ENCODE measurements at regions of chr17 and their contacts with region 1.

Region 1: GRCh38 chr17:29369831-29370735 is 20.1 kb upstream of the TAOK1 start:
- DNase-seq: peak; percentile 73 to 84 (median 82)
- H3K4me3 ChIP-seq: peak overlapping the region in 1 of 7 experiments; percentile 35
- H3K27ac ChIP-seq: no peak overlapping the region
- H3K4me1 ChIP-seq: peaks cover 0 to 16% (median 12%) of the 10 kb centered on the region in 4 experiments
- H3K27me3 ChIP-seq: no peaks in the 10 kb centered on the region

Region 2: GRCh38 chr17:29102060-29102459 is 268.0 kb before region 1 on chr17:
- CTCF ChIA-PET with region 1: no interaction called
- POLR2A ChIA-PET with region 1: no interaction called
- DNase-seq: no peak
- H3K4me3 ChIP-seq: no peak overlapping the region
- H3K27ac ChIP-seq: no peak overlapping the region
- H3K4me1 ChIP-seq: peaks cover 0 to 1% (median 0%) of the 10 kb centered on the region in 4 experiments
- H3K27me3 ChIP-seq: no peaks in the 10 kb centered on the region

Region 3: DNA sequence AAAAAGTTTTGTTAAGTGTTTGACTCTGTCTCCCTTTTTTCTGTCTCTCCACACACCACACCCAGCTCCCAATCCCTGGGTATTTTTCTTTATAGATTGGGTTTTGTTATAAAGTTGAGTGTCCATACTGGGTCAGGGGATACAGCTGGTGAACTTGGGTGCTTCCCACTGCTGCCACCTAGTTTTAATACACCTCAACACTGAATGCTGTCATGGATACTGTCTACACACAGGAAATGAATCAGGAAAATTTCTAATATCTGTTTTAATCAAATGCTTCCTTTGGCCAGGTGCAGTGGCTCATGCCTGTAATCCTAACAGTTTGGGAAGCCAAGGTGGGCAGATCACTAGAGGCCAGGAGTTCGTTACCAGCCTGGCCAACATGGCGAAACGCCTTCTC is 14.8 kb after region 1 on chr17:
- CTCF ChIA-PET with region 1: interaction called, 20 read pairs
- POLR2A ChIA-PET with region 1: no interaction called
- DNase-seq: peak in 1 of 3 donors; percentile 15
- H3K4me3 ChIP-seq: no peak overlapping the region
- H3K27ac ChIP-seq: no peak overlapping the region
- H3K4me1 ChIP-seq: peaks cover 0 to 5% (median 2%) of the 10 kb centered on the region in 4 experiments
- H3K27me3 ChIP-seq: no peaks in the 10 kb centered on the region

Region 4: DNA sequence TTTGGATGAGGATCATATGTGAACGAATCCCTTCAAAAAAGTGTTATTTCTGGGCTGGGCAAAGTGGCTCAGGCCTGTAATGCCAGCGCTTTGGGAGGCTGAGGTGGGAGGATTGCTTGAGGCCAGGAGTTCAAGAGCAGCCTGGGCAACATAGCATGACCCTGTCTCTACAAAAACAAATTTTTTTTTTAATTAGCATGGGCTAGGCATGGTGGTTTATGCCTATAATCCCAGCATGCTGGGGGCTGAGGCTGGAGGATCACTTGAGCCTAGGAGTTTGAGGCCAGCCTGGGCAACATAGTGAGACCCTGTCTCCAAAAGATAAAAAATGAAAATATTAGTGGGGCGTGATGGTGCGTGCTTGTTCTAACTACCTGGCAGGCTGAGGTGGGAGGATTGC is 24.7 kb after region 1 on chr17:
- CTCF ChIA-PET with region 1: interaction called, 11 read pairs
- POLR2A ChIA-PET with region 1: no interaction called
- DNase-seq: no peak
- H3K4me3 ChIP-seq: no peak overlapping the region
- H3K27ac ChIP-seq: no peak overlapping the region
- H3K4me1 ChIP-seq: peaks cover 2 to 24% (median 15%) of the 10 kb centered on the region in 4 experiments
- H3K27me3 ChIP-seq: no peaks in the 10 kb centered on the region